ENCODE measurements at regions of chr14 and their contacts with region 1.

Region 1: GRCh38 chr14:64438181-64438841 is 27.0 kb upstream of the AKAP5 start:
- DNase-seq: no peak
- ATAC-seq: no peak
- H3K4me3 ChIP-seq: no peak overlapping the region
- H3K27ac ChIP-seq: no peak overlapping the region
- H3K4me1 ChIP-seq: peaks cover 0 to 20% (median 9%) of the 10 kb centered on the region in 12 donors
- H3K27me3 ChIP-seq: no peaks in the 10 kb centered on the region
- CTCF ChIP-seq: no peak
- POLR2A ChIP-seq: no peak

Region 2: DNA sequence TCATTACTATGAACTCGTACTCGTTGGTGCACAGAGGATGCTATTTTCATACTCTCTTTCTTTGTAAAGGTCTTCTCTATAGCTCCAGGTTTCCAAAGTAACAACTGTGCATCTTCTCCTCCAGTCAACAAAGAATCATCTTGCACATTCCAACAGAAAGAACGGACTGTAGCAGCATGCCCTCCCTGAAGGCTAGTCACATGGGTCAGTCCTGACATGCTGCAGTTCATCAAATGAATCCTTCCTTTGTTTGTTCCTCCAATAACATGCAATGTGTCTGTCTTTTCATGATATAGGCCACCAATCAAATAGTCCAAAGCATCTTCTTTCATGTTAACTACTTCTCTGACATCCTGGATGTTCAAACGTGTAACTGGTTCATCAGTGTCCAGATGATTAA is 839.5 kb before region 1 on chr14:
- intact Hi-C with region 1: no loop called
- DNase-seq: no peak
- ATAC-seq: no peak
- H3K4me3 ChIP-seq: no peak overlapping the region
- H3K27ac ChIP-seq: no peak overlapping the region
- H3K4me1 ChIP-seq: no peaks in the 10 kb centered on the region
- H3K27me3 ChIP-seq: no peaks in the 10 kb centered on the region
- CTCF ChIP-seq: no peak
- POLR2A ChIP-seq: no peak

Region 3: GRCh38 chr14:64478634-64479250 is 40.4 kb after region 1 on chr14:
- intact Hi-C with region 1: loop called in 6 of 10 experiments (anchors 5 to 10 kb)
- DNase-seq: no peak
- ATAC-seq: no peak
- H3K4me3 ChIP-seq: no peak overlapping the region
- H3K27ac ChIP-seq: no peak overlapping the region
- H3K4me1 ChIP-seq: peaks cover 0 to 4% (median 0%) of the 10 kb centered on the region in 12 donors
- H3K27me3 ChIP-seq: no peaks in the 10 kb centered on the region
- CTCF ChIP-seq: peak in 10 of 12 donors; percentile 15 to 64 (median 48)
- POLR2A ChIP-seq: no peak

Region 4: DNA sequence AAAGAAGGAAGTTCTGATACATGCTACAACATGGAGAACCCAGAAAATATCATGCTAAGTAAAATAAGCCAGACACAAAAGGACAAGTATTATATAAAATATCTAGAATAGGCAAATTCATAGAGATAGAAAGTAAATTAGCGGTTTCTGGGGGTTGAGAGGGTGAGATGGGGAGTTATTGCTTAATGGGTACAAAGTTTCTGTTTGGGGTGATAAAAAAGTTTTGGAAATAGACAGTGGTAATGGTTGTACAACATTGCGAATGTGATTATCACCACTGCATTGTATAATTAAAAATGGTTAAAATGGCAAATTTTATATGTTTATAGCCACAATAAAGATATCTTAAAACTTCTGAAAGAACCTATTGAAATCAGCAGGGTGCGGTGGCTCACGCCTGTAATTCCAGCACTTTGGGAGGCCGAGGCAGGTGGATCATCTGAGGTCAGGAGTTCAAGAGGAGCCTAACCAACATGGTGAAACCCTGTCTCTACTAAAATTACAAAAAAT is 50.3 kb after region 1 on chr14:
- intact Hi-C with region 1: loop called in 1 of 10 experiments (anchors 10 kb)
- DNase-seq: no peak
- ATAC-seq: no peak
- H3K4me3 ChIP-seq: no peak overlapping the region
- H3K27ac ChIP-seq: no peak overlapping the region
- H3K4me1 ChIP-seq: peaks cover 0 to 27% (median 11%) of the 10 kb centered on the region in 12 donors
- H3K27me3 ChIP-seq: no peaks in the 10 kb centered on the region
- CTCF ChIP-seq: no peak
- POLR2A ChIP-seq: no peak

Region 5: DNA sequence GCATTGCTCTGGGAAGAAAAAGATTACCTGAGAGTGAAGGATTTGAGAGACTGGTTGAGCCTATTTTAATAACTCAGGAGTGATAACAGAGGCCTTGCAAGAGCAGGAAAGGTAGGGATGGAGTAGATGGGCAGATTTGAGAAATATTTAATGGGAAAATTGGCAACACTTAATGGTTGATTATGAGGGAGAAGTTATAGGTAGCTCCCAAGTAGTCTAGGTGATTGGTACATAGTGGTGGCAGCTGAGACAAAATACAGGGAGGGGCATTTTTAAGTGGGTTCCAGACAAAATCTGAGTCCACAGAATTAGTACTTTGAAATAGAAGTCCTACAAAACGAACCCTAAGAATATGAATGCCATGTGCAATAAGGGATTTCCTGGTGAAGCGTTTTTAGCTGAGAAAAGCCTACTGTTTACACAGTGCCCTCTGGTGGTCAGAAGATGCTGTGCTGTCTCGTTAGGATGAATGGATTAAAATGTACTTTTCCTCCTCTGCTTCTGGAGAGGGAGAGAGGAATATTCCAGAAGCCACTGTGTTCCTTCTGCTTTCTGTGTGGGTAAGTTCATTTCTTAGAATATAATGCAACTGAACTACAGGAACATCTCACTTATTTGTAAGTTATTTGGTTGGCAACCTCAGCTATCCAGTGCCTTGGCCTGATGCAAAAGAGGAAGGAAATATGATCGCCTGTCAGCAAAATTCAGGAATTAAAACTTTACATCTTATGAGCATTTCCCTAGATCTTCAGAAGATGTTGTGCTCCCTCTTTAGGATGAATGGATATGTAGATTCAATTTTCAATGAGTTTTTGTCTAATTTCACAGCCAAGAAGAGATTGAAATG is 72.7 kb after region 1 on chr14:
- intact Hi-C with region 1: loop called in 2 of 10 experiments (anchors 5 to 10 kb)
- DNase-seq: peak in 4 of 5 donors; percentile 40 to 71 (median 58)
- ATAC-seq: peak; percentile 18 to 75 (median 55)
- H3K4me3 ChIP-seq: peak overlapping the region in 1 of 12 donors; percentile 7
- H3K27ac ChIP-seq: peak overlapping the region in 2 of 12 donors; percentile 15 to 86
- H3K4me1 ChIP-seq: peaks cover 3 to 84% (median 55%) of the 10 kb centered on the region in 12 donors
- H3K27me3 ChIP-seq: no peaks in the 10 kb centered on the region
- CTCF ChIP-seq: peak; percentile 88 to 93 (median 91)
- POLR2A ChIP-seq: no peak

Region 6: GRCh38 chr14:64636208-64636979 is 198.1 kb after region 1 on chr14:
- intact Hi-C with region 1: loop called in 2 of 10 experiments (anchors 5 to 10 kb)
- DNase-seq: peak; percentile 59 to 77 (median 72)
- ATAC-seq: peak; percentile 82 to 91 (median 90)
- H3K4me3 ChIP-seq: no peak overlapping the region
- H3K27ac ChIP-seq: peak overlapping the region in 1 of 12 donors; percentile 33
- H3K4me1 ChIP-seq: peaks cover 0 to 9% (median 0%) of the 10 kb centered on the region in 12 donors
- H3K27me3 ChIP-seq: no peaks in the 10 kb centered on the region
- CTCF ChIP-seq: peak; percentile 84 to 97 (median 89)
- POLR2A ChIP-seq: no peak